ENCODE measurements at regions of chr4 and their contacts with region 1.

Region 1: GRCh38 chr4:22962295-22962694 is 269.6 kb downstream of the GBA3 start:
- DNase-seq: no peak
- ATAC-seq: no peak
- H3K4me3 ChIP-seq: no peak overlapping the region
- H3K27ac ChIP-seq: no peak overlapping the region
- H3K4me1 ChIP-seq: no peaks in the 10 kb centered on the region
- H3K27me3 ChIP-seq: no peaks in the 10 kb centered on the region
- CTCF ChIP-seq: peak; percentile 28; the same call in 1 of the 2 replicates

Region 2: GRCh38 chr4:23016981-23017380 is 54.7 kb after region 1 on chr4:
- CTCF ChIA-PET with region 1: interaction called, 11 read pairs
- POLR2A ChIA-PET with region 1: no interaction called
- in situ Hi-C with region 1: no loop called
- intact Hi-C with region 1: no loop called
- DNase-seq: no peak
- ATAC-seq: no peak
- H3K4me3 ChIP-seq: no peak overlapping the region
- H3K27ac ChIP-seq: no peak overlapping the region
- H3K4me1 ChIP-seq: no peaks in the 10 kb centered on the region
- H3K27me3 ChIP-seq: no peaks in the 10 kb centered on the region
- CTCF ChIP-seq: no peak

Measured in Panc1 (cell line).